Mammary epithelial cell (primary cell): ENCODE measurements at regions of chr1 and their contacts with region 1.

Region 1: GRCh38 chr1:52702886-52703787 is 5.0 kb upstream of the COA7 start:
- DNase-seq: peak; percentile 88
- H3K4me3 ChIP-seq: peak overlapping the region; percentile 38 to 68 (median 55)
- H3K27ac ChIP-seq: peak overlapping the region; percentile 0
- H3K4me1 ChIP-seq: peaks cover 17% of the 10 kb centered on the region
- H3K27me3 ChIP-seq: no peaks in the 10 kb centered on the region
- CTCF ChIP-seq: no peak

Region 2: DNA sequence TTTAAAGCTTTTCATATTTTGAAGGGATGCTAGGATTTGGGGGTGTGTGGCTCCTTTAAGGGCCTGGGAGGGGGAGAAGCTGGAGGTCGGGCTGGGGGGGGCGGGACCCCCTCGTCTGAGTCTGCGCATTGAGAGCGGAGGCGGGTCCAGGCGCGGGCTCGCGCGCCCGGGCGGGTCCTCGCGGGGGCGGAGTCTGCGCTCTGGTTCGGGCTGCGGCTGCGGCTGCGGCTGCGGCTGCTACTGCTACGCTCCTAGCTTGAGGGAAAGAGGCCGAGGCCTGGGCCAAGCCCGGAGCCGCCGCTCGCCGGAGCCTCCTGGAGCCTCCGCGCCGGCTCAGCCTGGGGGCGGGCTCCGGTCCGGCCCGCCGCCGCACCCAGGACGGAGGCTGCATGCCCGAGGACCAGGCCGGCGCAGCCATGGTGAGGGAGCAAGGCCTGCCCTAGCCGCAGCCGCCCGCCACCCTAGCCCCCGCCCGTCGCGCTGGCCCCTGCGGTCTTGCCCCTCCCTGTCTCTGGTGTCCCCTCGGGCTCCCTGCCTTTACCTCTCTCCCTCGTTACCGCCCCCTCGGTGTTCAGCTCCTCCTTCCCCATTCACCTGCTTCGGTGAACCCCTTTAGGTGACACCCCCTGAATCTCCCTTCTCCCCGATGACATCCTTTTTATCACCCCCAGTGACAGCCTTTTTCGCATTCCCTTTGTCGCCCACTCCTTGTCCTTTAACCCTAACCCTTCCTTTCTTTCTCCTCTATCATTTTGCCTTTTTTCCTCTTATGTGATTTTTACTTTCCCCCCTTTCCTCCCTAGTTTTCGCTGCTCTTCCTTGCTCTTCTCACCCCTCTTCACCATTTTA is 23.4 kb after region 1 on chr1 and contains the start of gene ZYG11B:
- CTCF ChIA-PET with region 1: no interaction called
- dilution Hi-C with region 1: no loop called
- in situ Hi-C with region 1: no loop called
- intact Hi-C with region 1: loop called (anchors 2 kb)
- DNase-seq: peak; percentile 81
- H3K4me3 ChIP-seq: peak within 1 kb of the TSS; percentile 73 to 84 (median 76)
- H3K27ac ChIP-seq: peak within 1 kb of the TSS; percentile 30
- H3K4me1 ChIP-seq: peaks cover 7% of the 10 kb centered on the region
- H3K27me3 ChIP-seq: no peaks in the 10 kb centered on the region
- CTCF ChIP-seq: no peak
- total RNA-seq, gene ZYG11B: 18.8 to 42.0 TPM

Region 3: GRCh38 chr1:52786148-52786547 is 83.0 kb after region 1 on chr1:
- CTCF ChIA-PET with region 1: no interaction called
- dilution Hi-C with region 1: no loop called
- in situ Hi-C with region 1: no loop called
- intact Hi-C with region 1: no loop called
- DNase-seq: no peak
- H3K4me3 ChIP-seq: no peak overlapping the region
- H3K27ac ChIP-seq: no peak overlapping the region
- H3K4me1 ChIP-seq: no peaks in the 10 kb centered on the region
- H3K27me3 ChIP-seq: no peaks in the 10 kb centered on the region
- CTCF ChIP-seq: no peak

Region 4: DNA sequence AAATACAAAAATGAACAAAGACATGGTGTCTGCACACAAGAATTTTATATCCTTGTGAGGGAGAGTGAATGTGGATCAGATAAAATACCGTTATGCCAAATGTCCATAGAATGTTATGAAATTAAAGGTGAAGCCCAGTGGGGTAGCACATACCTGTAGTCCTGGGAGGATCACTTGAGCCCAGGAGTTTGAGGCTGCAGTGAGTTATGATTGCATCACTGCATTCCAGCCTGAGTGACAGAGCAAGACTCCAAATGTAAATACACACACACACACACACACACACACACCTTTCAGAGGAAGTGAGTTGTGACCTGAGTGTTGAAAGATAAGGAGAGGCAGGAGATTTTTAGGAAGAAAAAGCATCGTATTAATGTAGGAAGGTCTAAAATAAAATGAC is 111.3 kb after region 1 on chr1:
- CTCF ChIA-PET with region 1: no interaction called
- dilution Hi-C with region 1: no loop called
- in situ Hi-C with region 1: loop called in 1 of 2 experiments (anchors 10 kb)
- intact Hi-C with region 1: loop called (anchors 5 kb)
- DNase-seq: peak; percentile 68
- H3K4me3 ChIP-seq: no peak overlapping the region
- H3K27ac ChIP-seq: no peak overlapping the region
- H3K4me1 ChIP-seq: peaks cover 7% of the 10 kb centered on the region
- H3K27me3 ChIP-seq: no peaks in the 10 kb centered on the region
- CTCF ChIP-seq: no peak

Region 5: GRCh38 chr1:52842643-52843309 is 139.6 kb after region 1 on chr1 and contains the start of gene ZYG11A:
- CTCF ChIA-PET with region 1: interaction called, 14 read pairs
- dilution Hi-C with region 1: no loop called
- in situ Hi-C with region 1: no loop called
- intact Hi-C with region 1: no loop called
- DNase-seq: peak; percentile 71
- H3K4me3 ChIP-seq: peak within 1 kb of the TSS; percentile 38 to 55 (median 38)
- H3K27ac ChIP-seq: no peak within 1 kb of the TSS
- H3K4me1 ChIP-seq: peaks cover 9% of the 10 kb centered on the region
- H3K27me3 ChIP-seq: peaks cover 12% of the 10 kb centered on the region
- CTCF ChIP-seq: peak in 1 of 2 donors; percentile 34
- total RNA-seq, gene ZYG11A: 0.47 to 0.67 TPM

Region 6: GRCh38 chr1:52927212-52928014 is 224.3 kb after region 1 on chr1 and contains the start of gene SCP2:
- CTCF ChIA-PET with region 1: no interaction called
- dilution Hi-C with region 1: no loop called
- in situ Hi-C with region 1: loop called in 1 of 2 experiments (anchors 10 kb)
- intact Hi-C with region 1: no loop called
- DNase-seq: peak; percentile 65
- H3K4me3 ChIP-seq: peak within 1 kb of the TSS; percentile 82 to 87 (median 85)
- H3K27ac ChIP-seq: peak within 1 kb of the TSS; percentile 47
- H3K4me1 ChIP-seq: peaks cover 3% of the 10 kb centered on the region
- H3K27me3 ChIP-seq: no peaks in the 10 kb centered on the region
- CTCF ChIP-seq: no peak
- total RNA-seq, gene SCP2: 80.0 to 105 TPM